ENCODE measurements at regions of chr17 and their contacts with region 1.

Region 1: GRCh38 chr17:58577642-58578091 is 63.2 kb upstream of the MTMR4 start:
- DNase-seq: peak; percentile 70
- ATAC-seq: peak; percentile 61
- H3K4me3 Mint-ChIP-seq: no peak overlapping the region
- H3K27ac Mint-ChIP-seq: no peak overlapping the region
- H3K4me1 Mint-ChIP-seq: peaks cover 4% of the 10 kb centered on the region
- H3K27me3 Mint-ChIP-seq: no peaks in the 10 kb centered on the region

Region 2: DNA sequence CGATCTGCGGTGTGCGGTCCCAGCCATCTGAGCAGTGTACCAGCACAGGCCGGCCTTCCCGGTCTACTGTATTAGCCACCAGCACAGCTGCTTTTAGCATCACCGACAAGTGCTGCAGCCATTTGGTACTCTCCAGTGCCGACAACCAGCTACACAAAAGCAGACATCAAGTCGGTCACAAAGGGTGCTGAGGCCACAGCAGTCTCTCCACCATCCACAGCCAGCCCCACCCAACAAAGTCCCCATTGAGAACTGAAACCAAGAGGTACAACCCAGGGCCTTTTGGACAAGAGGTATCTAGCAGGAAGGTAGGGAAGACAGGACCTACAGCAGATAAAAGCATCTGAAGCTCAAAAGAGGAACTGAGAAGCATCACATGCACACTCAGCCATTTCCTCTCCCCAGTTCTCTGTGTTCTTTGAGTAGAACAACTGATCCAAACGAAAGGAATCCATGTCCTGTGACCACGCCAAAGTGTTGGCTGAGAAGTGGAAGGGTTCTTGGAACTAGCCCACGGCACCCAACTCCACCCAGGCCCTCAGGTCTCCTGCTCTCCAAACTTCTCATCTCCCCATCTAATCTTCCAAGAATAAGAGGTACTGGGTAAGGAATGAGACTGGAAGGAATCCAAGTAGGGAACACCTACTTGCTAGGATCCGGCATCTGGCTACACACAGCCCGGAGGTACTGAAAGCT is 72.7 kb before region 1 on chr17:
- CTCF ChIA-PET with region 1: no interaction called
- DNase-seq: no peak
- ATAC-seq: no peak
- H3K4me3 Mint-ChIP-seq: no peak overlapping the region
- H3K27ac Mint-ChIP-seq: no peak overlapping the region
- H3K4me1 Mint-ChIP-seq: peaks cover 7% of the 10 kb centered on the region
- H3K27me3 Mint-ChIP-seq: no peaks in the 10 kb centered on the region

Region 3: GRCh38 chr17:58587702-58588254 is 10.1 kb after region 1 on chr17:
- CTCF ChIA-PET with region 1: interaction called, 23 read pairs
- DNase-seq: peak; percentile 66
- ATAC-seq: peak; percentile 76
- H3K4me3 Mint-ChIP-seq: no peak overlapping the region
- H3K27ac Mint-ChIP-seq: no peak overlapping the region
- H3K4me1 Mint-ChIP-seq: peaks cover 1% of the 10 kb centered on the region
- H3K27me3 Mint-ChIP-seq: peaks cover 15% of the 10 kb centered on the region

Region 4: GRCh38 chr17:58643140-58643539 is 65.5 kb after region 1 on chr17:
- CTCF ChIA-PET with region 1: no interaction called
- DNase-seq: no peak
- ATAC-seq: no peak
- H3K4me3 Mint-ChIP-seq: no peak overlapping the region
- H3K27ac Mint-ChIP-seq: no peak overlapping the region
- H3K4me1 Mint-ChIP-seq: peaks cover 18% of the 10 kb centered on the region
- H3K27me3 Mint-ChIP-seq: no peaks in the 10 kb centered on the region

Measured in activated CD8-positive, alpha-beta memory T cell treated with anti-CD3 and anti-CD28 coated beads, Interleukin-2, amount 10 ng/mL, durations not matched to agents 7 days and 5 days (primary cell).